MCF 10A (cell line): ENCODE measurements at regions of chr22 and their contacts with region 1.

Region 1: DNA sequence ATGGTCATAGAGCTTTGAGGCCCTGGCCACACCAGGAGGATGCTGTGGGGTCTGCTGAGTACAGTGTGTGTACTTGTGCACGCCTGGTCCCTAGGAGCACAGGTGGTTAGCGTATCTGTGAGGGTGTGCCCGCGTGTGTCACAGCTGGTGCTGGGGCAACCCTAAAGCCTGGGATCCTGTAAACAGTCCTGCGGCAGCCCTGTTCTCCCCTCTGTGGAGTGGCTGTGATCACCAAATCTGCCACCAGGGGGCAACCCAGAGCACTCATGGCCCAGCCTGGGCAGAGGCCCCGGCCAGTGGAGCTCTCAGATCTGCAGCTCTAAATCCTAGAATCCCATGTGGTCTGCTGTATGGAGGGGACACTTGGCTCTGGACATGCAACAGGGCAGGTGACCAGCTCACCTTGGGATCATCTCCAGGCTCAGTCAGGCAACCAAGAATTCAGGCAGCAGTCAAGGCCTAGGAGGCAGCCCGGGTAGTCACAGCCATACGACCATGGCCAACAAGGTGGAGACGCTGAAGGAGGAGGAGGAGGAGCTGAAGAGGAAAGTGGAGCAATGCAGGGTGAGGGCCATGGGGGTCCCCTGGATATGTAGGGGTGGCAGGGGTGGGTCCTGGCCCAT is 3.9 kb downstream of the SH3BP1 start:
- DNase-seq: peak; percentile 77
- H3K4me3 Mint-ChIP-seq: no peak overlapping the region
- H3K27ac Mint-ChIP-seq: no peak overlapping the region
- H3K4me1 Mint-ChIP-seq: peaks cover 7% of the 10 kb centered on the region
- H3K27me3 Mint-ChIP-seq: no peaks in the 10 kb centered on the region
- CTCF ChIP-seq: peak; percentile 92

Region 2: DNA sequence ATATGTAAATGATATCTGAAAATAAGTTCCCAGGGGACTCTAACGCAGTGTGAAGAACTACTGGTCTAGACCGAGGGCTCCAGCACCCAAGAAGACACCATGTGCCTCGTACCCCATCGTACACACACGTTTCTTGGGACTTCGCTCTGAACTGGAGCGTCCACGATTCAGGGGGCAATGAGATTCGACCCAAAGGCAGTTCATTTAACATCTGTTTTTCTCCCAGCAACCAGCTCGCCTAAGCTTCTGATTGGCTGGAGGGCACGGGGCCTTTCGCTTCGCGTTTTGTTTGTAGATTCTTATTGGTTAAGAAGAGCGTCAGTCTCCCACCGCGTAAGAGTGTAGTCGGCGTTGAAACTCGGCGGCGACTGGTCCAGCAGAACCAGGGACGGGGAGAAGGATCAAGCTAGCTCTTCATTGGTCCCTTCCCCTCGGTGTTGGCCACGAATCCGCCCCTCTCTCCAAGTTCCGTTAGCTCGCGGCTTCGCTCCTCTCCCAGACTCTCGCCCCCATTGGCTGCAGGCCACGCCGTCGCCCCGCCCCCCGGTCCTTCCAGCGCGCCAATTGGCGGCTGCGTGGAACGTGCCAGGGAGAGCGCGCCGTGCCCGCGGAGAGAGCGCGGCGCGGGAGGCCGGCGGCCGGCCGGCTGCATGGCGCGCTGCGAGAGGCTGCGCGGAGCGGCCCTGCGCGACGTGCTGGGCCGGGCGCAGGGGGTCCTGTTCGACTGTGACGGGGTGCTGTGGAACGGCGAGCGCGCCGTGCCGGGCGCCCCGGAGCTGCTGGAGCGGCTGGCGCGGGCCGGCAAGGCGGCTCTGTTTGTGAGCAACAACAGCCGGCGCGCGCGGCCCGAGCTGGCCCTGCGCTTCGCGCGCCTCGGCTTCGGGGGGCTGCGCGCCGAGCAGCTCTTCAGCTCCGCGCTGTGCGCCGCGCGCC is 15.1 kb after region 1 on chr22 and contains the start of gene PDXP:
- CTCF ChIA-PET with region 1: interaction called, 44 read pairs
- POLR2A ChIA-PET with region 1: interaction called, 34 read pairs
- intact Hi-C with region 1: loop called (anchors 1 kb)
- DNase-seq: peak; percentile 100
- H3K4me3 Mint-ChIP-seq: peak within 1 kb of the TSS; percentile 89
- H3K27ac Mint-ChIP-seq: peak within 1 kb of the TSS; percentile 87
- H3K4me1 Mint-ChIP-seq: peaks cover 22% of the 10 kb centered on the region
- H3K27me3 Mint-ChIP-seq: no peaks in the 10 kb centered on the region
- CTCF ChIP-seq: no peak
- total RNA-seq, gene PDXP: 10.3 and 10.5 TPM in 2 replicates

Region 3: DNA sequence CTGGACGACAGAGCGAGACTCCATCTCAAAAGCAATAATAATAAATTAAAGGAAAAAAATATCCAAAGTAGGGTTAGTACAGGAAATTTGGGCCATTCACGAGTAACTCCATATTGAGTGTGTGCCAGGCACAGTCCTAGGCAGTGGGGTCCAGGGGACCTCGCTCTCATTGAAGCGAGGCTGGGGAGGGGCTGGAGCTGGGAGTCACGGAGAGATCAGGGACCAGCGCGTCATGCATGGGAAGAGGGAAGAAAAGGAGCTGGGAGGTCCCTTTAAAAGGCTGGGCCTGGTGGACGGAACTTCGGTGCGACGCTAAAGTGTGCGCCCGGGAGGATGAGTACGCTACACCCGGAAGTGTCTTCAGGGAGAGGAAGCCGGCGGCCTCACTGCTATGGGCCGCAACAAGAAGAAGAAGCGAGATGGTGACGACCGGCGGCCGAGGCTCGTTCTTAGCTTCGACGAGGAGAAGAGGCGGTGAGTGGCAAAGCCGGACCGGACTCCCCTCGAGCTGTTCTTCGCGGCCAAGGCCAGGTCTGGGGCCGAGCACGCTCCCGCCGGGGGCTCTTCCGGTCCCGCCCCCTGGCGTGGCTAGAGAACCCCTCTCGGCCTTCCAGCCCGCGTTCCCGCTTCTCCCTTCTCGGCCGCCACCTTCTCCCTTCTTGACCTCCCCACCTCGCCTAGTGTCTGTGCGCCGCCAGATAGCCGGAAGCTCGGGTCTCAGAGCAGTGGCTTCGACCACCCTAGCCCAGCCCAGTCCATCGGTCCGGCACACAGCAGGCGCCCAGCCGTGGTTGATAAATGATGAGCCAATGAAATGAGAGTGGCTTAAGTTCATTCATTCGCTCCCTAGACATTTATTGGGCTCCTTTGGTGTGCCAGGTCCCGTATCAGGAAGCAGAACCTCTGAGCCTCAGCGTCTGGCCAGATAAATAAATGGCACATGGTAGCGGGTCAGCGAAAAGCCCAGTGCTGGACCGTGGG is 43.0 kb after region 1 on chr22 and contains the start of gene NOL12:
- CTCF ChIA-PET with region 1: interaction called, 113 read pairs
- POLR2A ChIA-PET with region 1: interaction called, 13 read pairs
- intact Hi-C with region 1: loop called (anchors 1 kb)
- DNase-seq: peak; percentile 90
- H3K4me3 Mint-ChIP-seq: peak within 1 kb of the TSS; percentile 96
- H3K27ac Mint-ChIP-seq: peak within 1 kb of the TSS; percentile 96
- H3K4me1 Mint-ChIP-seq: peaks cover 30% of the 10 kb centered on the region
- H3K27me3 Mint-ChIP-seq: no peaks in the 10 kb centered on the region
- CTCF ChIP-seq: no peak
- total RNA-seq, gene NOL12: 47.1 and 50.8 TPM in 2 replicates

Region 4: GRCh38 chr22:37741312-37741795 is 98.0 kb after region 1 on chr22:
- CTCF ChIA-PET with region 1: interaction called, 11 read pairs
- POLR2A ChIA-PET with region 1: interaction called, 3 read pairs
- intact Hi-C with region 1: no loop called
- DNase-seq: peak; percentile 96
- H3K4me3 Mint-ChIP-seq: no peak overlapping the region
- H3K27ac Mint-ChIP-seq: no peak overlapping the region
- H3K4me1 Mint-ChIP-seq: peaks cover 25% of the 10 kb centered on the region
- H3K27me3 Mint-ChIP-seq: no peaks in the 10 kb centered on the region
- CTCF ChIP-seq: no peak

Region 5: GRCh38 chr22:37782340-37783177 is 139.2 kb after region 1 on chr22:
- CTCF ChIA-PET with region 1: interaction called, 26 read pairs
- POLR2A ChIA-PET with region 1: no interaction called
- intact Hi-C with region 1: no loop called
- DNase-seq: peak; percentile 78
- H3K4me3 Mint-ChIP-seq: no peak overlapping the region
- H3K27ac Mint-ChIP-seq: peak overlapping the region; percentile 52
- H3K4me1 Mint-ChIP-seq: peaks cover 29% of the 10 kb centered on the region
- H3K27me3 Mint-ChIP-seq: no peaks in the 10 kb centered on the region
- CTCF ChIP-seq: peak; percentile 23